ENCODE measurements at regions of chr6 and their contacts with region 1.

Region 1: DNA sequence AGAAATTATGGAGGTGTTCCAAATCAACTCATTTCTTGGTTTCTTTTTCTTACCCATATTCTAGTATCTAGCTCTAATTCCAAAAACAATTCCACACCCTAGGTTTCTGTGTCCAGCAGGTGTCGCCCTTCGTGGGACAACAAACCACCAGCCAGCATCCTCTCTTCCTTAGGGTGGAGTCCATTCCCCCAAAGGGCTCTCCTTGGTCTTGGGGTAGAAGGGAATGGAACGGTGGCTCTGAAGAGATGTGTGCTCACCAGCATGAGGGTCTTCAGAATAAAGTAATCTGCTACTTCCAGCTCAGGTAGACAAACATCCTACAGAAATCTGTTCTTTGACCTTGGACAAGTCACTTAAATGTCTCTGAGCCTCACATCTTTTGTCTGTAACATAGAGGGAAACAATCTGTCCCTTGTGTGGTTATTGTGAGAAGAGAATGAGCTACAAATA is 7.2 kb downstream of the HLA-DMB start:
- DNase-seq: peak; percentile 38
- ATAC-seq: peak; percentile 70
- H3K4me3 ChIP-seq: no peak overlapping the region
- H3K27ac ChIP-seq: no peak overlapping the region
- H3K4me1 ChIP-seq: peaks cover 11% of the 10 kb centered on the region
- H3K27me3 ChIP-seq: no peaks in the 10 kb centered on the region; a peak in 1 of 4 replicates
- CTCF ChIP-seq: peak; percentile 75 to 85 (median 82)
- EP300 ChIP-seq: no peak
- POLR2A ChIP-seq: peak; percentile 46; the same call in 1 of the 2 replicates
- RAD21 ChIP-seq: peak; percentile 76

Region 2: GRCh38 chr6:32853541-32854375 is 79.9 kb before region 1 on chr6 and contains the starts of genes PSMB9 and TAP1:
- CTCF ChIA-PET with region 1: interaction called, 10 read pairs
- POLR2A ChIA-PET with region 1: interaction called, 4 read pairs
- RAD21 ChIA-PET with region 1: interaction called, 3 read pairs
- SMC1A ChIA-PET with region 1: interaction called, 5 read pairs
- in situ Hi-C with region 1: no loop called
- intact Hi-C with region 1: no loop called
- DNase-seq: peak; percentile 89
- ATAC-seq: peak; percentile 88
- H3K4me3 ChIP-seq: peak within 1 kb of the TSS; percentile 88
- H3K27ac ChIP-seq: peak within 1 kb of the TSS; percentile 100
- H3K4me1 ChIP-seq: peaks cover 32% of the 10 kb centered on the region
- H3K27me3 ChIP-seq: no peaks in the 10 kb centered on the region
- CTCF ChIP-seq: peak; percentile 79 to 84 (median 83)
- EP300 ChIP-seq: no peak
- POLR2A ChIP-seq: peak; percentile 83
- RAD21 ChIP-seq: peak; percentile 78
- polyA plus RNA-seq, gene PSMB9: 202 to 299 TPM
- polyA plus RNA-seq, gene TAP1: 33.4 to 60.0 TPM

Region 3: GRCh38 chr6:32894080-32895005 is 39.3 kb before region 1 on chr6:
- CTCF ChIA-PET with region 1: interaction called, 30 read pairs
- POLR2A ChIA-PET with region 1: interaction called, 23 read pairs
- RAD21 ChIA-PET with region 1: interaction called, 7 read pairs
- SMC1A ChIA-PET with region 1: interaction called, 11 read pairs
- in situ Hi-C with region 1: no loop called
- intact Hi-C with region 1: loop called (anchors 2 kb)
- DNase-seq: peak; percentile 91
- ATAC-seq: peak; percentile 98
- H3K4me3 ChIP-seq: peak overlapping the region; percentile 81
- H3K27ac ChIP-seq: peak overlapping the region; percentile 90
- H3K4me1 ChIP-seq: peaks cover 12% of the 10 kb centered on the region
- H3K27me3 ChIP-seq: no peaks in the 10 kb centered on the region
- CTCF ChIP-seq: no peak; a peak in 1 of 6 replicates
- EP300 ChIP-seq: no peak
- POLR2A ChIP-seq: peak; percentile 83
- RAD21 ChIP-seq: no peak

Region 4: DNA sequence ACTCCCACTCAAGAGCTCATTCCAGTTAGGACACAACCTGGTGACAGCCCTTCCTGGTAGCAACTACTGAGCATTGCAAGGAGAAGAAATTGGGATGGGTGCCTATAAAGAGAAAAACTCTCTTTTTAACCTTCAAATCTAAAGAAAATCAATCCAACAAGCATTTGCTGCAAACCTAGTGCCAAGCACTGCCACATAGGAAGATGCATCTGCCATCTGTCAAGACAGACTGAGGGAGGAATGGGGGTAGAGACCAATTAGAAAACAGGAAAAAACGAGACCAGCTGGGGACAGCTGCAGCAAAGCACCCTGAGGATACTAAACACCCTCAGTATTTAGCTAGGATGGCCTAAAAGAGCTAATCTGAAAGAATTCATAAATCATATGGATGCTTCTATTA is 20.7 kb before region 1 on chr6:
- CTCF ChIA-PET with region 1: interaction called, 51 read pairs
- POLR2A ChIA-PET with region 1: interaction called, 3 read pairs
- RAD21 ChIA-PET with region 1: interaction called, 4 read pairs
- SMC1A ChIA-PET with region 1: interaction called, 12 read pairs
- in situ Hi-C with region 1: no loop called
- intact Hi-C with region 1: no loop called
- DNase-seq: no peak
- ATAC-seq: no peak
- H3K4me3 ChIP-seq: no peak overlapping the region
- H3K27ac ChIP-seq: no peak overlapping the region
- H3K4me1 ChIP-seq: no peaks in the 10 kb centered on the region
- H3K27me3 ChIP-seq: no peaks in the 10 kb centered on the region
- CTCF ChIP-seq: no peak
- EP300 ChIP-seq: no peak
- POLR2A ChIP-seq: no peak
- RAD21 ChIP-seq: no peak

Region 5: DNA sequence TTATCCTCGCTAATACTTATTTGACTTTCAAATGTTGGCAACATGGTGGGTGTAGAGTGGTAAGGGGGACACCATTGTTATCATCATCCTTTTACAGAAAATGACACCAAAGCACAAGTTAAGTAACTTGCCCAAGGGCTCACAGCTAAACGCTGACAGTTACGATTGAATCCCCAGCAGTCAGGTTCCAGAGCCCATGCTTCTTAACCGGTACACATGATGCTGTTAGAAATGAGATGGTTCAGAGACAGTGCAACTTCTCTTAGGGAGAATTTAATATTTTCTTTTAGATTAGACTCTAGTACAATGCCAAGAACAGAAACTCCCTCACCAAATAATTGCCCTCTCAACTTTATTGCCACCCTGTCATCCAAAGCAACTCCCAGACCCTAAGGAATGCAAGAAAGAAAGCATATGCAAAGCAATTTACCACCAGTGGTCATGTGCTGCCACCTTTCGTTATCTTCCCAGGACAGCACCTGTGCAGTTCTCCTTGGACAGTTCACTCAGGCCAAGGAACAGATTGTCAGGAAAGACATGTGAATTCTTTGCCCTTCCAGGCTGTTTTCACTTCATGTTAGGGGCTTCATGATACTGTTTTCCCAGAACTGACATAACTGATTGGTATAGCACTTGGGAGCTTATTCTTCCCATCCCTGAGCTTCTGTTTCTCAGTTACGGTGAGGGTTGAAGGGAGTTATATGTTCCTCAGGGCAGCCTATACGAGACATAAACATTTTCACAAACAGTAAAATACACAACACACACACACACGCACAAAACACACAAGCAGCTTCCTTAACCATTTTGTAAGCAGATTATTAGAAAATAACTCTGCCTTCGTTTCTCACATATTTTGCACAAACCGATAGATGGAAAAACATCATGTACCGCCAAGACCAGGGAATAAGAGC is 14.1 kb after region 1 on chr6:
- CTCF ChIA-PET with region 1: interaction called, 532 read pairs
- POLR2A ChIA-PET with region 1: interaction called, 183 read pairs
- RAD21 ChIA-PET with region 1: interaction called, 130 read pairs
- SMC1A ChIA-PET with region 1: interaction called, 354 read pairs
- in situ Hi-C with region 1: no loop called
- intact Hi-C with region 1: loop called (anchors 1 kb)
- DNase-seq: peak; percentile 56
- ATAC-seq: peak; percentile 13; the same call in 2 of the 3 replicates
- H3K4me3 ChIP-seq: peak overlapping the region; percentile 22
- H3K27ac ChIP-seq: peak overlapping the region; percentile 59
- H3K4me1 ChIP-seq: peaks cover 55% of the 10 kb centered on the region
- H3K27me3 ChIP-seq: no peaks in the 10 kb centered on the region
- CTCF ChIP-seq: peak; percentile 69 to 88 (median 82)
- EP300 ChIP-seq: no peak
- POLR2A ChIP-seq: no peak
- RAD21 ChIP-seq: peak; percentile 92

Region 6: GRCh38 chr6:32964776-32965175 is 31.1 kb after region 1 on chr6:
- CTCF ChIA-PET with region 1: interaction called, 532 read pairs
- POLR2A ChIA-PET with region 1: interaction called, 270 read pairs
- RAD21 ChIA-PET with region 1: interaction called, 50 read pairs
- SMC1A ChIA-PET with region 1: interaction called, 24 read pairs
- in situ Hi-C with region 1: no loop called
- intact Hi-C with region 1: no loop called
- DNase-seq: no peak
- ATAC-seq: no peak
- H3K4me3 ChIP-seq: no peak overlapping the region
- H3K27ac ChIP-seq: no peak overlapping the region
- H3K4me1 ChIP-seq: peaks cover 8% of the 10 kb centered on the region
- H3K27me3 ChIP-seq: no peaks in the 10 kb centered on the region
- CTCF ChIP-seq: no peak
- EP300 ChIP-seq: no peak
- POLR2A ChIP-seq: no peak
- RAD21 ChIP-seq: no peak